ENCODE measurements at regions of chr4 and their contacts with region 1.

Region 1: GRCh38 chr4:75724066-75724866 is at the start of gene USO1:
- DNase-seq: peak; percentile 100
- H3K4me3 ChIP-seq: peak within 1 kb of the TSS; percentile 74 to 95 (median 82)
- H3K27ac ChIP-seq: peak within 1 kb of the TSS; percentile 92 to 99 (median 96)
- H3K4me1 ChIP-seq: peaks cover 18 to 65% (median 51%) of the 10 kb centered on the region in 6 donors
- H3K27me3 ChIP-seq: no peaks in the 10 kb centered on the region
- CTCF ChIP-seq: peak; percentile 48 to 82 (median 68)
- POLR2A ChIP-seq: peak; percentile 60 to 92 (median 88)
- total RNA-seq, gene USO1: 42.9 to 64.8 (median 51.9) TPM

Region 2: GRCh38 chr4:75673027-75673958 is 51.0 kb before region 1 on chr4 and contains the start of gene G3BP2:
- intact Hi-C with region 1: loop called (anchors 5 kb)
- DNase-seq: peak; percentile 99
- H3K4me3 ChIP-seq: peak within 1 kb of the TSS; percentile 75 to 96 (median 87)
- H3K27ac ChIP-seq: peak within 1 kb of the TSS; percentile 97 to 100 (median 98)
- H3K4me1 ChIP-seq: peaks cover 34 to 50% (median 45%) of the 10 kb centered on the region in 6 donors
- H3K27me3 ChIP-seq: no peaks in the 10 kb centered on the region
- CTCF ChIP-seq: peak in 2 of 11 experiments; percentile 11 to 25
- POLR2A ChIP-seq: peak; percentile 70 to 86 (median 76)
- total RNA-seq, gene G3BP2: 90.8 to 113 (median 106) TPM